ENCODE measurements at regions of chr10 and their contacts with region 1.

Region 1: DNA sequence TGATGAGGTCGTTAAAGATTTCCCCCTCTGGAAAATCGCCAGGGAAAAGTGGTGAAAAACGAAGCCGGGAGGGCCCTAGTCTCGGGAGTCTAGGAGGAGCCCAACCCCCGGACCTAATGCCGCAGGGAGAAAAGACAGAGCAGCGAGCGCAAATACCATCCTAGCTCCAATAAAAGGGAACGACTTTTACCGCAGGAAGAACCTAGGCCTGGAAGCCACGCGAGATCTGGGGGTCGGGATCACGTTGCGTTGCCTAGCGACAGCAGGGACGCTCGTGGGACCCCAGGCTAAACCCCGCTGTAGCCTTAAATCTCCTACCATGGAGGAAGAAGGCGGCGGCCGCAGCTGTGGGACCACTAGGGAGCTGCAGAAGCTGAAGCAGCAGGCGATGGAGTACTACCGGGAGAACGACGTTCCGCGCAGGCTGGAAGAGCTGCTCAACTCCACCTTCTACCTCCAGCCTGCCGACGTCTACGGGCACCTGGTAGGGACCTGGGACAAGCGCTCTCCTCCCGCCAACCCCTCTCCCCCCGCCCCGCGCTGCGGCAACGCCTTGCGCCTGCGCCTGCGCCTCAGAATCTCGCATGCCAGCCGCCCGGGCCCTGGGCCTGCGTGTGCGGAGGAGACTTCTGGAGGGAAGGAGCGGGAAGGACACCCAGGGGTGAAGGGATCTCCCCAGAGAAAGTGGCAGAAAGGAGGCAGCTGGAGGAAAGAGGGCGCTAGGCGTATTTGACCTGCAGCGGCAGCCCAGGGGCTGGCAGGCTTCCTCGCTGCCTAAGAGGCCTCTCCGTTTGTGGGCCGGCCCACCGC is at the start of gene ENO4:
- DNase-seq: peak; percentile 89
- H3K4me3 ChIP-seq: peak within 1 kb of the TSS; percentile 8 to 64 (median 37)
- H3K27ac ChIP-seq: no peak within 1 kb of the TSS
- H3K4me1 ChIP-seq: peaks cover 2% of the 10 kb centered on the region
- H3K27me3 ChIP-seq: peaks cover 17 to 18% of the 10 kb centered on the region in 2 experiments
- CTCF ChIP-seq: no peak
- POLR2A ChIP-seq: no peak
- total RNA-seq, gene ENO4: not detected in 2 replicates

Region 2: GRCh38 chr10:116737627-116738327 is 111.7 kb before region 1 on chr10:
- CTCF ChIA-PET with region 1: no interaction called
- POLR2A ChIA-PET with region 1: no interaction called
- dilution Hi-C with region 1: no loop called
- intact Hi-C with region 1: no loop called
- DNase-seq: no peak
- H3K4me3 ChIP-seq: no peak overlapping the region
- H3K27ac ChIP-seq: no peak overlapping the region
- H3K4me1 ChIP-seq: peaks cover 4% of the 10 kb centered on the region
- H3K27me3 ChIP-seq: peaks cover 18% of the 10 kb centered on the region in 2 experiments
- CTCF ChIP-seq: no peak
- POLR2A ChIP-seq: no peak

Region 3: DNA sequence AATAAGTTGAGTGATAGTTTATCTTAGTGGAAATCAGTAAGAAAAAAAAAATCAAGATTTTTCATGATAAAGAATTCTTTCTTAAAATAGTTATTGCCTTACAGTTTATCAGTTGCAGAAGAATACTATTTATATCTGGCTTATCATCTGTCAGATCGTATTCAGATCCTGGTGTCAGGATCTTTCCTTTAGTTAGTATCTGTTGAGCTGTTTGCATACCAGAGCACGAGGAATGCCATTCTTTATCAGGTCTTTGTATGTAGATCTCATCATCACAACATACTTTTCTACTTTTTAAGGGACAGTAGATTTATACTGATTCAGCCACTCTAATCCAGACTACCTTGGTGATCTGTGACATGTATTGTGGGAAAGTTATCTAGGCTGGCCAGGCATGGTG is 12.3 kb after region 1 on chr10:
- CTCF ChIA-PET with region 1: no interaction called
- POLR2A ChIA-PET with region 1: no interaction called
- dilution Hi-C with region 1: no loop called
- intact Hi-C with region 1: no loop called
- DNase-seq: no peak
- H3K4me3 ChIP-seq: no peak overlapping the region
- H3K27ac ChIP-seq: no peak overlapping the region
- H3K4me1 ChIP-seq: no peaks in the 10 kb centered on the region
- H3K27me3 ChIP-seq: no peaks in the 10 kb centered on the region
- CTCF ChIP-seq: no peak
- POLR2A ChIP-seq: no peak

Region 4: GRCh38 chr10:116888380-116889055 is 39.1 kb after region 1 on chr10:
- CTCF ChIA-PET with region 1: interaction called, 4 read pairs
- POLR2A ChIA-PET with region 1: no interaction called
- dilution Hi-C with region 1: no loop called
- intact Hi-C with region 1: loop called (anchors 2 kb)
- DNase-seq: peak; percentile 65
- H3K4me3 ChIP-seq: no peak overlapping the region
- H3K27ac ChIP-seq: peak overlapping the region; percentile 23
- H3K4me1 ChIP-seq: peaks cover 38% of the 10 kb centered on the region
- H3K27me3 ChIP-seq: no peaks in the 10 kb centered on the region
- CTCF ChIP-seq: no peak
- POLR2A ChIP-seq: no peak